ENCODE measurements at regions of chr14 and their contacts with region 1.

Region 1: DNA sequence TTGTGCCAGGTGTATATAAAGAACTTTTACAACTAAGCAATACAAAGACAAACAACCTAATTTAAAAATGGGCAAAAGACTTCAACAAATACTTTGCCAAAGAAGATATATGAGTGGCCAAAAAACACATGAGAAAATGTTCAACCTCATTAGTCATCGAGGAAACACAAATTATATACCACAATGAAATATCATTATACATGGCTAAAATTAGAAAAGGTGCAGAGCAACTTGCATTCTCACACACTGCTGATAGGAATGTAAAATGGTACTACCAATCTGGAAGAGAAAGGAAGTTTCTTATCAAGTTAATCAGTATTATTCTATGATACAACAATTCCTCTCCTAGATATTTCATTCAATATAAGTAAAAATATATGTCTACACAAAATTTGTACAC is 131.6 kb upstream of the FRMD6 start:
- DNase-seq: no peak

Region 2: GRCh38 chr14:51487876-51488275 is 32.2 kb before region 1 on chr14:
- intact Hi-C with region 1: loop called in 1 of 2 experiments (anchors 1 kb)
- DNase-seq: no peak

Measured in posterior vena cava (tissue), 2 donors.